Ascending aorta (tissue), 2 donors: ENCODE measurements at regions of chr7 and their contacts with region 1.

Region 1: DNA sequence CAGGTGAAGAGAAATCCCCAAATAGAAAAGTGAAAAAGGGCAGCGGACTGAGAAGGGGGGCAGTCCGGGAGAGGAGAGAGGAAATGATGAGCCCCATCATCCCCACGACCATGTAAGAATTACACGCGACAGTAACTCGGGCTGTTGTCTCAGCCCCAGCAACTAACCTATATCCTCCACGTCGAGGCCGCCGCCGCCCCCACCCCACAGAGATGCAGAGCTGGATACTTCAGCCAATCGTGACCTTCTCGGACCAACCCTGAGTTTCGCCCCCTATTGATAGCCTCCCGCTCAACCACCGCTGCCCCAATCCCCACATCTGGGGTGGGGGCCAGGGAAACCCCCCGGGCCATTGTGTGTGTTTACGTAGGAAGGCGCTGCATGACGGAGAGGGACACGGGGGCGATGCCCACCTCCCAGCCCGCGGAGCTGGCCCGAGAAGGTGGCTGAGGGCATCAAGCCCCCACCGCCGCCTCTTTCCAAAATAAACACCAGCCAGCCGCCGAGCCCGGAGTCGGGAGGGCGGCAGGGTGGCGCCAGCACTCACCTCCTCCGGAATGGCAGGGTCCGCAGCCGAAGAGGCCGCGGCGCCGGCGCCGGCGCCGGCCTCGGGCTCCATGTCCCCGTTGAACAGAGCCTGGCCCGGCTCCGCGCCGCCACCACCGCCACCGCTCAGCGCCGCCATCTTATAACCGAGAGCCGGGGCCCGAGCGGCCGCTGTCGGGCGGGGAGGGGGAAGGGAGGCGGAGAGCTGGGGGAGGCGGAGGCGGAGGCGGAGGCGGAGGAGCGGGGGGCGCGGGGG is 509 bp downstream of the BRAF start:
- DNase-seq: peak; percentile 42 to 84
- H3K4me3 ChIP-seq: peak overlapping the region; percentile 95 to 100
- H3K27ac ChIP-seq: peak overlapping the region; percentile 100
- H3K4me1 ChIP-seq: peaks cover 6 to 11% of the 10 kb centered on the region in 2 donors
- H3K27me3 ChIP-seq: no peaks in the 10 kb centered on the region
- CTCF ChIP-seq: peak; percentile 24 to 63 (median 48)

Region 2: DNA sequence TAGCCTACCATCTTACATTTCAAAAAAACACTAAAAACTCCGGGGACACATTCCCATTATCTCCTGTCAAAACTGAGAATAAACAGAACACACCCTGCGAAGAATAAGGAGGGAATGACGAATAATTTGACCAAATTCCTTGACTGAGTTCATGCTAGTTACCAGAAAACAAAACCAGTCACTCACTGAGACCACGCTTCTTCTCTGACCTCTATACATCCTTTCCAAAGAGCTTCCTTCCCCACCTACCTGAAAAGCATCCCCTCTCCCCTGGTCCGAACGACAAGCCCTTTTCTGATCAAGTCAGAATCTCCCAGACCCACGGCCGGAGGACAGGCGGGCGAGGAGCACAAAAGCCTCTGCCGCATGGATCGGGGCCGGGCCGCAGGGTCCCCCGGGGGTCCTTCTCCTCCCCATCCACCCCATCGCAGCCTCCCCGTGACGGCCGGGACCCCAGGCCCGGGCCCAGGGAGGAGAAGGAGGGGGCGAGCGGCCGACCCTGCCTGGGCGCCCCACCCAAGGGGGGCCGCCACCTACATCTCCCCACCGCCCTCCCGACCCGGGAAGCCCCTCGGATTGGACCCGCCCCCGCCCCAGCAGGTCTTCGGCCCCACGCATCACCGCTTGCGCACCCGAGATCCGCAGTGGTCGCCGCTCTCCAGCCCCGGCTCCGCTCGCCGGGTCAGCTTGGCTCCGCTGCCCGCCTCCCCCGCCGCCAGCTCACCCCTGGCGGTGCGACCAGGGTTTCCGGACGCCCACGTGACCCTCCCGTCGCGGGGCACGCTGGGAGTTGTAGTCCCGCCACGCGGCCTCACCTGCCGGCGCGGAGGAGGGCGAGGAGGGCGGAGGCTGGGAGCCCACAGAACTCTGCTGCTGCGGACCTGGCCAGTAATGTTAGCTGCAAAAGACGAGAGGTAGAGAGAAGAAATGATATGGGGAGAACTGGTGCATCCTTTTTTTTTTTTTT is 526.2 kb before region 1 on chr7 and contains the start of gene SLC37A3:
- intact Hi-C with region 1: loop called (anchors 10 kb)
- DNase-seq: peak; percentile 37 to 89
- H3K4me3 ChIP-seq: peak within 1 kb of the TSS; percentile 81
- H3K27ac ChIP-seq: peak within 1 kb of the TSS; percentile 76 to 83
- H3K4me1 ChIP-seq: peaks cover 0 to 3% of the 10 kb centered on the region in 2 donors
- H3K27me3 ChIP-seq: no peaks in the 10 kb centered on the region
- CTCF ChIP-seq: peak in 1 of 3 experiments; percentile 29
- total RNA-seq, gene SLC37A3: 15.0 TPM

Region 3: DNA sequence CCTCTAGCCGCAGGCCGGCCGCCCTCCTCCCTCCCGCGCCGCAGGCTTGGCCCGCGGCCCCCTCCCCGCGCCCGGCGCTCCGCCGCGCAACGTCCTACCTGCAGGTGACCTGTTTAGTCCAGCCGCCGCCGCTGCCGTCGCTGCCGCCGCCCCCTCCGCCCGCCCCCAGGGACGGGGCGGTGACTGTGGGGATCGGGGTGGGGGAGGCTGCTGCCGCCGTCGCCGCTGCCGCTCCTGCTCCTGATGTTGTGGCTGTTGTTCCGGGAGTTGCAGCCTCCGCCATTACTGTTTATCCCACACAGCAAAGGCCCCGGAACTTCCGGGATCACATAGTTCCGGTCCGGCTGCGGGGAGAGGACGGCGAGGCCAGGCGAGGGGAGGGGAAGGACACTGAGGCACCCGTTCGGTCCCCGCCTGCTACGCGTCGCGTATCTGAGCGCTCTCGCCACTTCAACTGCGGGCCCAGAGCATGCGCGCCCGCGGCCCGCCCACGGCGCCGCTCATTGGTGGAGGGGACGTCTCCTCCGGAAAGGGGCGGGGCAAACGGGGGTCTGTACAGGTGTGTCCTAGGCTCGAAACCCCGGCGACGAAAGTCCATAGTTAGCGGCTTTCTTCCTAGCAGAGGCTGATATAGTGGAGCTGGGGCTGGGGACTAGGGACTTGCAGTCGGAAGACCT is 445.0 kb before region 1 on chr7 and contains the start of gene MKRN1:
- intact Hi-C with region 1: loop called (anchors 2 kb)
- DNase-seq: peak; percentile 80 to 96
- H3K4me3 ChIP-seq: peak within 1 kb of the TSS; percentile 90 to 93
- H3K27ac ChIP-seq: peak within 1 kb of the TSS; percentile 73 to 87
- H3K4me1 ChIP-seq: peaks cover 5 to 20% of the 10 kb centered on the region in 2 donors
- H3K27me3 ChIP-seq: no peaks in the 10 kb centered on the region
- CTCF ChIP-seq: no peak
- total RNA-seq, gene MKRN1: 20.6 TPM

Region 4: GRCh38 chr7:140696680-140697446 is 227.4 kb before region 1 on chr7 and contains the start of gene NDUFB2:
- intact Hi-C with region 1: loop called (anchors 1 kb)
- DNase-seq: peak in 1 of 2 donors; percentile 77
- H3K4me3 ChIP-seq: peak within 1 kb of the TSS; percentile 62 to 74
- H3K27ac ChIP-seq: peak within 1 kb of the TSS; percentile 80 to 89
- H3K4me1 ChIP-seq: peaks cover 0 to 13% of the 10 kb centered on the region in 2 donors
- H3K27me3 ChIP-seq: no peaks in the 10 kb centered on the region
- CTCF ChIP-seq: no peak
- total RNA-seq, gene NDUFB2: 35.9 TPM

Region 5: DNA sequence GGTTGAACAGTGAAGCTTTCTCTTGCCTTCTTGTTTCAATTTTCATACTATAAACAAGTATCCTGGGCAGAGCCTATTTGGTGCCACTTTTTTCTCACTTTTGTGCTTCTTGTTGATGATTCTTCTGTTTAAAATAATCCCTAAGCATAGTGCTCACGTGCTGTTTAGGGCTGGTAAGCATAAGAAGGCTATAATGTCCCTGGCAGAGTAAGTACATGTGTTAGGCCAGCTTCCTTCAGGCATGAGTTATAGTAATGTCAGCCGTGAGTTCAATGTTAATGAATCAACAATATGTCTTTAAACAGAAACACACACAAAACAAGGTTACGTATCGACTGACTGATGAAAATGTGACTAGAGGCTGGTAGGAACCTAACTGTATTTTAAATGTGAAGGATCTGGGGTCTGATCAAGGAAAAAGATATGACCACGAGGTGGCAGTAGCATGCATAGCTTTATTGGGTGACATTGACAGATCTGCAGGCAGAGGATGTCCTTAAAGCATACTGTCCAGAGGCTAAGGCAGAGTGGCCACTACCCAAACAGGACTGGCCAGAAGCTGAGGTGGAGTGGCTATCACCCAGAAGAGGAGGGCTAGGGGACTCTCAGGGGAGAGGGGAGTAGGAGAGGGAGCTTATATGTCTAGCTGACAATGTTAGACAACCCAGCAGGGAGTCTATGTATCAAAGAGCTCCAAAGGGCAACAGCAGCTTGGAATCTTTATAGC is 113.2 kb before region 1 on chr7:
- intact Hi-C with region 1: loop called (anchors 2 kb)
- DNase-seq: peak in 1 of 2 donors; percentile 73
- H3K4me3 ChIP-seq: no peak overlapping the region
- H3K27ac ChIP-seq: no peak overlapping the region
- H3K4me1 ChIP-seq: no peaks in the 10 kb centered on the region
- H3K27me3 ChIP-seq: no peaks in the 10 kb centered on the region
- CTCF ChIP-seq: peak; percentile 45 to 79 (median 58)

Region 6: DNA sequence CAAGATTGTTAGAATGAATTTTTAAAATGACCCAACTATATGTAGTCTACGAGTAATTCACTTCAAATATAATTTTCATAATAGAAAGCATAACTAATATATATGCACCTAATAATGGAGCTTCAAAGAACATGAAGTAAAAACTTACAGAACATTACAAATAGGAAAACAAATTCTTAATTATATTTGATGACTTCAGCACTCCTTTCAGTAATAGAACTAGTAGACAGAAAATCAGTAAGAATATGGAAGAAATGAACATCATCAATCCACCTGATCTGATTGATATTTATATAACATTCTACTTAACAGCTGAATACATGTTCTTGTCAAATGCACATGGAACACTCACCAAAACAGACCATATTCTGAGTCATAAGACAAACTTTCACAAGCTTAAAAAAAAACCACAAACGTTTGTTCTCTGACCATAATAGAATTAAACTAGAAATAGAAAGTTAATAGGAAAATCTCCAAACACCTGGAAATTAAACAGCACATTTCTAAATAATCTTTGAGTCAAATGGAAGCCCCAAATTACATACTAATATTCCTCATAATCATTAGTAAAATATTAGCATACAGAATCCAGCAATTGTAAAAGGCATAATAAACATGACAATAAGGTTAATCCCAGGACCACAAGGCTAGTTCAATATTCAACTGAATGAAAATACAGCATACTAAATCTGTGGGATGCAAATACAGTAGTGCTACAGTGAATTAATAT is 47.5 kb before region 1 on chr7:
- intact Hi-C with region 1: loop called (anchors 5 kb)
- DNase-seq: no peak
- H3K4me3 ChIP-seq: no peak overlapping the region
- H3K27ac ChIP-seq: no peak overlapping the region
- H3K4me1 ChIP-seq: peaks cover 0 to 11% of the 10 kb centered on the region in 2 donors
- H3K27me3 ChIP-seq: no peaks in the 10 kb centered on the region
- CTCF ChIP-seq: no peak

Region 7: DNA sequence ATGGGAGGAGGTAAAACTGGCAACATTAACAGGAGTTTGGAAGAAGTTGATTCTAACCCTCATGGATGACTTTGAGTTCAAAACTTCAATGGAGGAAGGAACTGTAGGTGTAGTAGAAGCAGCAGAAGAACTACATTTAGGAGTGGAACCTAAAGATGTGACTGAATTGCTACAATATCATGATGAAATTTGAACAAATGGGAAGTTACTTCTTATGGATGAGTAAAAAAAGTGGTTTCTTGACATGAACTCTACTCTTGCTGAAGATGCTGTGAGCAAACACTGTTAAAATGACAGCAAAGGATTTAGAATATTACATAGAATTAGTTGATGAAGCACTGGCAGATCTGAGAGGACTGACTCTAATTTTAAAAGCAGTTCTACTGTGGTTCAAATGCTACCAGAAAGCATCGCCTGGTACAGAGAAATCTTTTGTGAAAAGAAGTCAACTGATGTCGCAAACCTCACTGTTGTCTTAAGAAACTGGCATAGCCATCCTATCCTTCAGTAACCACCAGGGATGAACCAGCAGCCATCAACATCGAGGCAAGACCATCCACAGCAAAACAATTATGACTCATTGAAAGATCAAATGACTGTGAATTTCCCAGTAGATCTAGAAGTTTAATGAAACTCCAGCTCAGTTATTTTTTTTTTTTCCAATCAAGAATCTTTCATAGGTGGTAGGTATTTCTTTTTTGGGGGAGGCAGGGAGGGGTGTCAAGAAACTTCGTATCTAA is 20.3 kb before region 1 on chr7:
- intact Hi-C with region 1: no loop called
- DNase-seq: no peak
- H3K4me3 ChIP-seq: no peak overlapping the region
- H3K27ac ChIP-seq: no peak overlapping the region
- H3K4me1 ChIP-seq: no peaks in the 10 kb centered on the region
- H3K27me3 ChIP-seq: no peaks in the 10 kb centered on the region
- CTCF ChIP-seq: no peak

Region 8: DNA sequence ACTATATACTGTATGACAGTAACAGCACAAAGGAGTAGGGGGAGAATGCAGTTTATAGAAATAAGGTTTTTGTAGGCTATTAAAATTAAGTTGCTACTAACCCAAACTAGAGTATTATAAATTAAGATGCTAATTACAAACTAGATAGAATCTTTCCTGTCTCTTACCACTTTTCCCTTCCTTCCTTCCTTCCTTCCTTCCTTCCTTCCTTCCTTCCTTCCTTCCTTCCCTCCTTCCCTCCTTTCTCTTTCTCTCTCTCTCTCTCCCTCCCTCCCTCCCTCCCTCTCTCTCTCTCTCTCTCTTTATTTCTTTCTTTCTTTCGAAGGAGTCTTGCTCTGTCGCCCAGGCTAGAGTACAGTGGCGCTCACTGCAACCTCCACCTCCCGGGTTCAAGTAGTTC is 36.9 kb after region 1 on chr7:
- intact Hi-C with region 1: no loop called
- DNase-seq: no peak
- H3K4me3 ChIP-seq: no peak overlapping the region
- H3K27ac ChIP-seq: no peak overlapping the region
- H3K4me1 ChIP-seq: no peaks in the 10 kb centered on the region
- H3K27me3 ChIP-seq: no peaks in the 10 kb centered on the region
- CTCF ChIP-seq: no peak

Region 9: GRCh38 chr7:140972876-140973859 is 48.9 kb after region 1 on chr7:
- intact Hi-C with region 1: no loop called
- DNase-seq: no peak
- H3K4me3 ChIP-seq: no peak overlapping the region
- H3K27ac ChIP-seq: no peak overlapping the region
- H3K4me1 ChIP-seq: no peaks in the 10 kb centered on the region
- H3K27me3 ChIP-seq: no peaks in the 10 kb centered on the region
- CTCF ChIP-seq: no peak

Region 10: GRCh38 chr7:141097430-141097829 is 173.2 kb after region 1 on chr7:
- intact Hi-C with region 1: no loop called
- DNase-seq: no peak
- H3K4me3 ChIP-seq: no peak overlapping the region
- H3K27ac ChIP-seq: no peak overlapping the region
- H3K4me1 ChIP-seq: no peaks in the 10 kb centered on the region
- H3K27me3 ChIP-seq: no peaks in the 10 kb centered on the region
- CTCF ChIP-seq: no peak